ENCODE measurements at regions of chr19 and their contacts with region 1.

Region 1: DNA sequence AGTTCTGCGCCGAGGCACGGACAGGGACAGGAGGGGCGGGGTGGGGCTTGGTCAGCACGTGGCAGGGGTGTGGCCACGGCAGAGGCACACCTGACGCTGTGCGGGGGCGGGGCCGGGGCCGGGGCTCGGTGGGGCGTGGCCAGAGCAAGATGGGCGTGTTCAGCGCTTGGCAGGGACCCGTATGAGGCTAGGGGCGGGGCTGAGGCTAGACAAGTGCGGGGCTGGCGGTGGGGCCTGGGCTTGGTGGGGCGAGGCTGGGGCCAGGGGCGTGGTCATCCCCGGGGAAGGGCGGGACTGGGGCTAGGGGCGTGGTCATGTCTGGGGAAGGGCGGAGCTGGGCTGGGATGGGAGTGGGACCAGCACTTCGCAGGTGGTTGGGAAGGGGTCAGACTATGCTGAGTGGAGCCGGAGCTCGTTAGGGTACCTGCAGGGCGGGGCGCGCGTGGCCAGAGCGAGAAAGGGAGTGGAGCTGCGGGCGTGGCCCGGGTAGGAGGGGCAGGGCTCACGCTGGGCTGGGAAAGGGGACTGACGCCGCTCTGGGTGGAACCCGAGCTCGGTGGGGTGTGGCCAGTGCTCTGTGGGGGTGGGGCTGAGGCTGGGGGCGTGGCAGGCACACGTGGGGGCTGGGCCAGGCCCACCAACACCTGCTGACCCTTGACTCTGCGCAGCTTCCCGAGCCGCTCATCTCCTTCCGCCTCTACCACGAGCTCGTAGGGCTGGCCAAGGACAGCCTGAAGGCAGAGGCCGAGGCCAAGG is 12.8 kb downstream of the POLR2E start:
- DNase-seq: peak; percentile 95 to 99
- H3K4me3 ChIP-seq: peak overlapping the region; percentile 12 to 50 (median 32); a peak in 5 of 8 replicates
- H3K27ac ChIP-seq: no peak overlapping the region
- H3K4me1 ChIP-seq: peaks cover 0 to 7% (median 0%) of the 10 kb centered on the region in 4 experiments; a peak in 4 of 7 replicates
- H3K27me3 ChIP-seq: no peaks in the 10 kb centered on the region
- CTCF ChIP-seq: no peak
- EP300 ChIP-seq: no peak
- POLR2A ChIP-seq: no peak
- RAD21 ChIP-seq: no peak

Region 2: DNA sequence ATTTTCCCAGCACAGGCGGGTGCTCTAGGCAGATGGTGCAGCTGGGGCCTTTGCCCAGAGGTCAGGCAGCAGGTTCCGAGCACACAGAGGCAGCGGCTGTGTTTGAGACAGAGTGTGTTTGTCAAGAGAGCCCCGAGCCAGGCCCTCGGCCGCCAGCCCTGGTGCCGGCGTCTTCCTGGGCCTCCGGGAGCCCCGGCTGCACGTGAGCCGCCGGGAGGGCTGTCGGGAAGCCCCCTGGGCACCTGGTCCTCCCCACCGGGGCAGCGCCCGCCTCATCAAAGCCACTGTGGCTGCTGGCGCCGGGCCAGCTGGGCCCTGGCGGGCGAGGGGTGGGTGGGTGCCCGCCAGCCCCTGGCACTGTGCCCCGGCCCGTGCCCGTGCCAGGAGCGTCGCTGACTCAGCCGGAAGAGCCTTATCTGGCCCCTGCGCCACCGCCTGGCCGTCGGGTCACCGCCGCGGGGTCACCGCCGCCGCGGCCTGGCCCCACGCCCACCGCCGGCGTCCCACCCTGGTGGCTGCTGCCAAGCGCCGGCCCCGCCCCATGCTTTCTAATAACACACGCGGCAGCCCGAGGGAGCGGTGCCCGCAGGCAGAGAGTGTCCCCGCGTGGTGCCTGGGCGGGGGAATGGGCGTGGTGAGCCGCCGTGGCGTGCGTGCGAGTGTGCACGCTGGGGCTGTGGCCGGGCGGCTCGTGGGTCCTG is 141.6 kb before region 1 on chr19:
- CTCF ChIA-PET with region 1: no interaction called
- POLR2A ChIA-PET with region 1: no interaction called
- DNase-seq: no peak
- H3K4me3 ChIP-seq: no peak overlapping the region
- H3K27ac ChIP-seq: no peak overlapping the region
- H3K4me1 ChIP-seq: no peaks in the 10 kb centered on the region
- H3K27me3 ChIP-seq: no peaks in the 10 kb centered on the region
- CTCF ChIP-seq: no peak
- EP300 ChIP-seq: no peak
- POLR2A ChIP-seq: no peak
- RAD21 ChIP-seq: no peak

Region 3: GRCh38 chr19:1064661-1065605 is 17.4 kb before region 1 on chr19:
- CTCF ChIA-PET with region 1: interaction called, 54 read pairs
- POLR2A ChIA-PET with region 1: interaction called, 72 read pairs
- DNase-seq: peak in 1 of 2 experiments; percentile 88
- H3K4me3 ChIP-seq: peak overlapping the region in 2 of 4 experiments; percentile 9 to 54; a peak in 3 of 8 replicates
- H3K27ac ChIP-seq: no peak overlapping the region
- H3K4me1 ChIP-seq: peaks cover 0 to 27% (median 19%) of the 10 kb centered on the region in 4 experiments; a peak in 6 of 7 replicates
- H3K27me3 ChIP-seq: peaks cover 0 to 26% (median 18%) of the 10 kb centered on the region in 4 experiments; a peak in 5 of 7 replicates
- CTCF ChIP-seq: peak; percentile 65 to 86 (median 84)
- EP300 ChIP-seq: no peak
- POLR2A ChIP-seq: no peak
- RAD21 ChIP-seq: peak; percentile 38 to 60; a peak in 3 of 4 replicates

Region 4: DNA sequence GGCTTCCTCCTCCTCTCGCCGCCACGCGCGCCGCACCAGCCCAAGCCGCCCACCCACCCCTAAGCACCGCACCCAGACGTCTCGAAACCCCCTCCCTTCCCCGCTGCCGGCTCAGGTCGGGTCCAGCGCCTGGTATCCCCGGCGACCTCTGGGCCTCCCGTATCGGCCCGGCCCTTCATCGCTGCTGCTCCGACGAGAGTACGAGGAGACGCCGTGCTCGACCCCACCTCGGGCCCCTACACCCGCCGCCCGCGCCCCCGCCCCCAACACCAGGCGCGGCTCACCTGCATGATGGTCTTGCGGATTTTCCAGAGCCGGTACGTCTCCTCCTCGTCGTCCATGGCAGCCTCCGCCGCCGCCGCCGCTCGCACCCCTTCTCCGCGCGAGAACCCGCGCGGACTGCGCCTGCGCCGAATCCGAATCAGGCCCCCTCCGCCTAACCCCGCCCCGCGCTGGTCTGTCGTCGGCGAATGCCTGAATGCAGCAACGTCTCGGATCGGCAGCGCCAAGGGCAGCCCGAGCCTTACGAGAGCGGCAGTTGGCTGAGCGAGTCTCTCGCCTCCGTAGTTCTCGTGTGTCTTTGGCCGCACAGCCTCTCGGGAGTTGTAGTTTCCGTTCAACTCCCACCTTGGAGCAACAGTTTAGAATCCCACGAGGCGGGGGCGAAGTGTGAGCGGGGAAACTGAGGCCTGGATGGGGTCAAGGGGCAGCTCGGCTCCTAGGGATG is 12.8 kb after region 1 on chr19 and contains the start of gene POLR2E:
- CTCF ChIA-PET with region 1: interaction called, 7 read pairs
- POLR2A ChIA-PET with region 1: interaction called, 116 read pairs
- DNase-seq: peak; percentile 90 to 99
- H3K4me3 ChIP-seq: peak within 1 kb of the TSS; percentile 64 to 95 (median 91)
- H3K27ac ChIP-seq: peak within 1 kb of the TSS; percentile 15; the same call in 1 of the 2 replicates
- H3K4me1 ChIP-seq: peaks cover 0 to 8% (median 5%) of the 10 kb centered on the region in 4 experiments; a peak in 4 of 7 replicates
- H3K27me3 ChIP-seq: peaks cover 0 to 2% (median 0%) of the 10 kb centered on the region in 4 experiments; a peak in 1 of 7 replicates
- CTCF ChIP-seq: no peak
- EP300 ChIP-seq: no peak
- POLR2A ChIP-seq: peak in 1 of 2 experiments; percentile 76; a peak in 2 of 3 replicates
- RAD21 ChIP-seq: no peak
- total RNA-seq, gene POLR2E: 274 and 281 TPM in 2 replicates

Region 5: DNA sequence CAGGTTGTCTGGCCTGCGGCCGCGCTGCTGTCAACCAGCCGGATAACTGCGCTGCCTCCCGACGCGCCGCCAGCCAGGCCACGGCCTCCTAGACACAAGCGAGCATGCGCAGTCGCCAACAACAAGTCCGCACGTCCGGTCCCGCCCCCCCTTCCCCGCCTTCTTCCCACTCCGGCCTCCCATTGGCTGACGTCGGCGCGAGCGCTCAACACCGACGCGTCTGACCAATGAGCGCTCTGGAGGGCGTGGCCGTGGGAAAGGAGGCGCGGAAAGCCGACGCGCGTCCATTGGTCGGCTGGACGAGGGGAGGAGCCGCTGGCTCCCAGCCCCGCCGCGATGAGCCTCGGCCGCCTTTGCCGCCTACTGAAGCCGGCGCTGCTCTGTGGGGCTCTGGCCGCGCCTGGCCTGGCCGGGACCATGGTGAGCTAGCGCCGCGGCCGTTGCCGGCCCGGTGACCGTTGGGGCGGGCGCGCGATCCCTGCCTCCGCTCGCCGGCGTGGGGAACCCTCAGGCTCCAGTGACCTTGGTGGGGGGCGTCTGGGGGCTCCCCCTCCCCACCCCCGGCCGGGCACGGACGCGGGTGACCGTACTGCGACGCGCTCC is 21.5 kb after region 1 on chr19 and contains the start of gene GPX4:
- CTCF ChIA-PET with region 1: interaction called, 5 read pairs
- POLR2A ChIA-PET with region 1: interaction called, 116 read pairs
- DNase-seq: peak; percentile 95 to 98
- H3K4me3 ChIP-seq: peak within 1 kb of the TSS; percentile 57 to 93 (median 64)
- H3K27ac ChIP-seq: peak within 1 kb of the TSS; percentile 66; the same call in 1 of the 2 replicates
- H3K4me1 ChIP-seq: peaks cover 4 to 21% (median 8%) of the 10 kb centered on the region in 4 experiments
- H3K27me3 ChIP-seq: no peaks in the 10 kb centered on the region
- CTCF ChIP-seq: no peak
- EP300 ChIP-seq: no peak
- POLR2A ChIP-seq: peak; percentile 95 to 96
- RAD21 ChIP-seq: no peak
- total RNA-seq, gene GPX4: 342 and 355 TPM in 2 replicates

Region 6: DNA sequence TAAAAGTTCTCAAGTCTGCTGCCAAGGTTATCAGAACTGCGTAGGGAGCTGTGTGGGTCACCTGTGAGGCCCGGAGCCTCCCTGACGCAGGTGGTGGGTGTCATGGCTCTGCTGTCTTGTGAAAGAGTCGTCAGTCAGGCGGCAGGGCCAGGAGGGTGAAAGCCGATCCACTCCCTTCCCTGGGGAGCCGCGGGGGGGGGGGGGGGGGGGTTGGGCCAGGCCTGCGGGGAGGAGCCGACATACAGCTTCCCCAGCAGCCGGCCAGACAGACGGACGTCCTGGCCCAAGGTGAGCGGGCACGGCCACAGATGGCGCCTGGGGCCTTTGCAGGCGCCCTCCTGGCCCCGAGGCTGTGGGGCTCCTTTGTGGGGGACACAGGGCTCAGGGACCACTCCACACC is 79.4 kb after region 1 on chr19:
- CTCF ChIA-PET with region 1: no interaction called
- POLR2A ChIA-PET with region 1: no interaction called
- DNase-seq: no peak
- H3K4me3 ChIP-seq: no peak overlapping the region
- H3K27ac ChIP-seq: no peak overlapping the region
- H3K4me1 ChIP-seq: peaks cover 0 to under 1% (median 0%) of the 10 kb centered on the region in 4 experiments; a peak in 1 of 7 replicates
- H3K27me3 ChIP-seq: no peaks in the 10 kb centered on the region
- CTCF ChIP-seq: no peak
- EP300 ChIP-seq: no peak
- POLR2A ChIP-seq: no peak
- RAD21 ChIP-seq: no peak